Activated B cell treated with CpG ODN at 0.5 μM for 24 hours (primary cell): ENCODE measurements at regions of chr7 and their contacts with region 1.

Region 1: GRCh38 chr7:6435486-6436384 is 12.0 kb downstream of the DAGLB start:
- DNase-seq: peak; percentile 83
- ATAC-seq: peak; percentile 92
- H3K4me3 Mint-ChIP-seq: peak overlapping the region; percentile 76
- H3K27ac Mint-ChIP-seq: peak overlapping the region; percentile 76
- H3K4me1 Mint-ChIP-seq: peaks cover 43% of the 10 kb centered on the region
- H3K27me3 Mint-ChIP-seq: no peaks in the 10 kb centered on the region
- CTCF ChIP-seq: peak; percentile 65

Region 2: DNA sequence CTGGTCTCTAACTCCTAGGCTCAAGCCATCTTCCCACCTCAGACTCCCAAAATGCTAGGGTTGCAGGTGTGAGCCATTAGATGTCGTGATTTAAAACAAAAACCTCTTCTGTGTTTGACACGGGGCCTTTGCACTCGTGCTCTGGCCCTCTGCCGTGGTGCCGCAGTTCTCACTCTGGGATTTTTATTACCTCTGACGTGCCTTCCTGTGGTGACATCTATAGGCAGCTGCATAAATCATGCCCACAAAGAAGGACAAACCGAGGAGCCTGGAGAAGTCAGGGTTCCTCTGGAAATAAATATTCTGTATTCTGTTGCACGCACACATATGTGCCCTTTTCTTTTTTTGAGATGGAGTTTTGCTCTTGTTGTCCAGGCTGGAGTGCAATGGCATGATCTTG is 581.0 kb before region 1 on chr7:
- CTCF ChIA-PET with region 1: no interaction called
- POLR2A ChIA-PET with region 1: no interaction called
- intact Hi-C with region 1: loop called (anchors 2 kb)
- DNase-seq: no peak
- ATAC-seq: no peak
- H3K4me3 Mint-ChIP-seq: no peak overlapping the region
- H3K27ac Mint-ChIP-seq: no peak overlapping the region
- H3K4me1 Mint-ChIP-seq: peaks cover 3% of the 10 kb centered on the region
- H3K27me3 Mint-ChIP-seq: no peaks in the 10 kb centered on the region
- CTCF ChIP-seq: no peak

Region 3: DNA sequence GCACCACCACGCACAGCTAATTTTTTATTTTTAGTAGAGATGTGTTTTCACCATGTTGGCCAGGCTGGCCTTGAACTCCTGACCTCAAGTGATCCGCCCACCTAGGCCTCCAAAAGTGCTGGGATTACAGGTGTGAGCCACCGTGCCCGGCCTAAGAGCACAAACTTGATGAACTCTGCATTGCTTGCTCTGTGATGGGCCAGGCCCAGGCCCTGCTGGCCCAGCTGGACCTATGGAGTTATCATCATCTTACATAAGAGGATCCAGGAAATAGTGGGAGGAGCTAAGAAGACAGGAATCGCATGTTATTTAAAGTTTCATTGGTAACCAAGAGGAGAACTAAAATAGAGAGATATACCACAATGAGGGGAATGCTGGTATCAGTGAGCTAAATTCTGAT is 74.9 kb before region 1 on chr7:
- CTCF ChIA-PET with region 1: no interaction called
- POLR2A ChIA-PET with region 1: no interaction called
- intact Hi-C with region 1: no loop called
- DNase-seq: no peak
- ATAC-seq: no peak
- H3K4me3 Mint-ChIP-seq: no peak overlapping the region
- H3K27ac Mint-ChIP-seq: no peak overlapping the region
- H3K4me1 Mint-ChIP-seq: peaks cover 3% of the 10 kb centered on the region
- H3K27me3 Mint-ChIP-seq: no peaks in the 10 kb centered on the region
- CTCF ChIP-seq: no peak

Region 4: GRCh38 chr7:6545398-6546126 is 109.8 kb after region 1 on chr7:
- CTCF ChIA-PET with region 1: no interaction called
- POLR2A ChIA-PET with region 1: no interaction called
- intact Hi-C with region 1: no loop called
- DNase-seq: no peak
- ATAC-seq: no peak
- H3K4me3 Mint-ChIP-seq: no peak overlapping the region
- H3K27ac Mint-ChIP-seq: no peak overlapping the region
- H3K4me1 Mint-ChIP-seq: peaks cover 7% of the 10 kb centered on the region
- H3K27me3 Mint-ChIP-seq: peaks cover 2% of the 10 kb centered on the region
- CTCF ChIP-seq: no peak